ENCODE measurements at regions of chr4 and their contacts with region 1.

Region 1: DNA sequence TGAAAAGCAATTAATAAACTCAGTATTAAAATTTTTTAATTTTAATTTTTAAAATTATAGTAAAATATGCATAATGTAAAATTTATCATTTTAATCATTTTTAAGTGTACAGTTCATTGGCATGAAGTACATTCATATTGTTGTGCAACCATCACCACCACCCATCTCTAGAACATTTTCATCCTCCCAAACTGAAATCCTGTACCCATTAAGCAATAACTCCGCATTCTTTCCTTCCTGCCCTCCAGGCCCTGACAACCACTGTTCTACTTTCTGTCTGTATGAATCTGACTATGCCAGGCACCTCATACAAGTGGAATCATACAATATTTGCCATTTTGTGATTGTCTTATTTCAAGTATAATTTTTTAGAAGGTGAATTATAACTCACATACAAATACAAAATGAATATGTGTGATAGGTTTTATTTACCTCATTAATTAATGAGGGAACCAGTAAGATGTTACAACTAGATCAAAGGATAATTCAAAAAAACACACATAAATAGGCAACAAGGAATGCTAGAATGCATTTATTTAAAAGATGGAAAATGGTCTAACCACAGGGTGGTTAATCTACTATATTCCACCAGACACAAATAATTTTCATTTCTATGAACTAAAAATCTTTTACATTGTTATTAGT is 13.1 kb upstream of the AFF1 start:
- DNase-seq: no peak
- H3K4me3 ChIP-seq: no peak overlapping the region
- H3K4me3 Mint-ChIP-seq: no peak overlapping the region
- H3K27ac ChIP-seq: no peak overlapping the region
- H3K27ac Mint-ChIP-seq: no peak overlapping the region
- H3K4me1 ChIP-seq: no peaks in the 10 kb centered on the region
- H3K4me1 Mint-ChIP-seq: peaks cover 0 to 4% (median 2%) of the 10 kb centered on the region in 4 donors
- H3K27me3 ChIP-seq: no peaks in the 10 kb centered on the region
- H3K27me3 Mint-ChIP-seq: no peaks in the 10 kb centered on the region

Region 2: DNA sequence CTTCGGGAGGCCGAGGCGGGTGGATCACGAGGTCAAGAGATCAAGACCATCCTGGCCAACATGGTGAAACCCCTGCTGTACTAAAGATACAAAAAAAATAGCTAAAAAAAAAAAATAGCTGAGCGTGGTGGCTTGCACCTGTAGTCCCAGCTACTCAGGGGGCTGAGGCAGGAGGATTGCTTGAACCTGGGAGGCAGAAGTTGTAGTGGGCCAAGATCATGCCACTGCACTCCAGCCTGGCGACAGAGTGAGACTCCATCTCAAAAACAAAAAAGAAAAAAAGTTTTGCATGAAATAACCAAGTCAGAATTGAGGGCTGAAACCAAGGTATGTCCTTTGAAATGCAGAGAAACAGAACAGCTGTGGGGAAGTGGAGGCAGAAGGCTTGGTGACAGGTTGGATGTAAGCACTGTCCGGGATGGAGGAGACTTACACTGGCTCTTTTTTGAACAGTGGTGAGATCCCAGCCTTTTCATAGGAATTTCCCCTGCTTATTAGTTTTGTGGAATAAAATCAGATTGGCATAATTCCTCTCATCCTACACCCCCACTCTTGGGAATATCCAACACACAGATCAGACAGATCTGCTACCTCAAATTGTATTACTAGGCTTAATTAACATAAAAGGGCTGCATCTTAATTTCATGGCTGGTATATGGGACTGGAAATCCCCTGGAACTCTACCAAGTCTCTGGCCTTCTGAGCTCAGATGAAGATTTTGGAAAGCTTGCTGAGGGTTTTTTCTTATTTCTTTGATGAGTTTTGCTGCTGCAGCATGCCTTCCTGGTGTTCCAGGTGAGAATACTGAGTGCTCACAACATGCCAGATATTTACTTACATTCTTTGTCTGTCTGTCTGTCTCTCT is 10.7 kb before region 1 on chr4:
- CTCF ChIA-PET with region 1: interaction called, 30 read pairs
- POLR2A ChIA-PET with region 1: no interaction called
- intact Hi-C with region 1: no loop called
- DNase-seq: no peak
- H3K4me3 ChIP-seq: no peak overlapping the region
- H3K4me3 Mint-ChIP-seq: no peak overlapping the region
- H3K27ac ChIP-seq: no peak overlapping the region
- H3K27ac Mint-ChIP-seq: peak overlapping the region in 2 of 7 donors; percentile 22 to 74
- H3K4me1 ChIP-seq: peaks cover 5% of the 10 kb centered on the region
- H3K4me1 Mint-ChIP-seq: peaks cover 12 to 18% (median 13%) of the 10 kb centered on the region in 4 donors
- H3K27me3 ChIP-seq: no peaks in the 10 kb centered on the region
- H3K27me3 Mint-ChIP-seq: peaks cover 0 to 2% of the 10 kb centered on the region in 2 donors

Region 3: GRCh38 chr4:87006676-87007527 is 85.2 kb after region 1 on chr4:
- CTCF ChIA-PET with region 1: interaction called, 53 read pairs
- POLR2A ChIA-PET with region 1: interaction called, 25 read pairs
- intact Hi-C with region 1: loop called (anchors 1 kb)
- DNase-seq: peak; percentile 90 to 95 (median 91)
- H3K4me3 ChIP-seq: peak overlapping the region; percentile 82 to 86
- H3K4me3 Mint-ChIP-seq: peak overlapping the region; percentile 88 to 99 (median 94)
- H3K27ac ChIP-seq: peak overlapping the region; percentile 83
- H3K27ac Mint-ChIP-seq: peak overlapping the region; percentile 91 to 100 (median 97)
- H3K4me1 ChIP-seq: peaks cover 53% of the 10 kb centered on the region
- H3K4me1 Mint-ChIP-seq: peaks cover 47 to 58% (median 53%) of the 10 kb centered on the region in 4 donors
- H3K27me3 ChIP-seq: no peaks in the 10 kb centered on the region
- H3K27me3 Mint-ChIP-seq: no peaks in the 10 kb centered on the region

Region 4: DNA sequence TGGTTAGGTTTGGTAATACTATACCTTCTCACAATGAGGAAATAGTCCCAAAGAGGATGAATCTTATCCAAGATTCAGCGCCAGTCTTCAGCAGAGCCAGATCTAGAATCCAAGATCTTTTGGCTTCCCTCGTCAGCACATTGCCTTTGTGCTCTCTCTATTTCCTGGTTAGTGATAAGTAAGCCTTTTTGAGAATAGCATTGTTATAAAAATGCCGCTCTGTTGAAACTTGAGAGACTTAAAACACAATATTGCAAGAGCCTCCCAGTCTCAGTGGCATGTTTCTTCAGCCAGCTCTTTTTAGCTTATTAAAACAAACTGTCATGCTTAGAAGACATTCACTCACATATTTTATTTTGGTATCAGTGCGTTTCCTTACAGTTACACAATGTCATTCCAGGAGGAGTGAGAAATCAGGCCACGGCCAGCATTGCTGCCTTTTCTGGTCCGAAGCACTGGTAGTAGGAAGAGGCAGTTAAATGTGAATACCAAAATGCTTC is 157.3 kb after region 1 on chr4:
- CTCF ChIA-PET with region 1: interaction called, 23 read pairs
- POLR2A ChIA-PET with region 1: no interaction called
- intact Hi-C with region 1: no loop called
- DNase-seq: no peak
- H3K4me3 ChIP-seq: no peak overlapping the region
- H3K4me3 Mint-ChIP-seq: no peak overlapping the region
- H3K27ac ChIP-seq: no peak overlapping the region
- H3K27ac Mint-ChIP-seq: no peak overlapping the region
- H3K4me1 ChIP-seq: peaks cover 28% of the 10 kb centered on the region
- H3K4me1 Mint-ChIP-seq: peaks cover 38 to 66% (median 48%) of the 10 kb centered on the region in 4 donors
- H3K27me3 ChIP-seq: no peaks in the 10 kb centered on the region
- H3K27me3 Mint-ChIP-seq: no peaks in the 10 kb centered on the region

Region 5: DNA sequence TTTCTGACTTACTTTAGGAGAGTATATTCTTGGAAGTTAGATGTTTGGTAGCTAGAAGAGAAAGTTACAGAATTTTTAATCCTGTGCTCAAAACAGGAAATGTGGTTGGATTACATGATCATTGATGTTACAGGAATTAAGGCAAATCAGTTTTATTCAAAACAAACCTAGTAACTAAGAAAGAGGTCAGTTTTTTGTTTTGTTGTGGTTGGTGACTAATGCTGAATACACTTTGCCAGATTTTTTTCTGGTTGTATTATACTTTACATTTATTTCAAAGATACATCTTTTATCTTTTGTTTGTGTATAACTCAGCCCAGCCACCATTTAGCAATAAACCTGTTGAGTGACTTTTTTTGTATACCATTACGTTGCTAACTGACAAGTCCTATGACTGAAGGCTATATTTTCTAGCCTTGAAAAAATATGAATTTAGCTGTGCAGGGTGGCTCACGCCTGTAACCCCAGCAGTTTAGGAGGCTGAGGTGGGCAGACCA is 182.0 kb after region 1 on chr4:
- CTCF ChIA-PET with region 1: interaction called, 110 read pairs
- POLR2A ChIA-PET with region 1: interaction called, 6 read pairs
- intact Hi-C with region 1: no loop called
- DNase-seq: peak; percentile 51 to 84 (median 80)
- H3K4me3 ChIP-seq: no peak overlapping the region
- H3K4me3 Mint-ChIP-seq: peak overlapping the region; percentile 30 to 82 (median 75)
- H3K27ac ChIP-seq: peak overlapping the region; percentile 51
- H3K27ac Mint-ChIP-seq: peak overlapping the region; percentile 91 to 97 (median 96)
- H3K4me1 ChIP-seq: peaks cover 48% of the 10 kb centered on the region
- H3K4me1 Mint-ChIP-seq: peaks cover 51 to 67% (median 56%) of the 10 kb centered on the region in 4 donors
- H3K27me3 ChIP-seq: no peaks in the 10 kb centered on the region
- H3K27me3 Mint-ChIP-seq: no peaks in the 10 kb centered on the region

Region 6: GRCh38 chr4:87150498-87151261 is 228.9 kb after region 1 on chr4:
- CTCF ChIA-PET with region 1: interaction called, 29 read pairs
- POLR2A ChIA-PET with region 1: no interaction called
- intact Hi-C with region 1: loop called (anchors 1 kb)
- DNase-seq: peak; percentile 41 to 65 (median 54)
- H3K4me3 ChIP-seq: no peak overlapping the region
- H3K4me3 Mint-ChIP-seq: no peak overlapping the region
- H3K27ac ChIP-seq: no peak overlapping the region
- H3K27ac Mint-ChIP-seq: no peak overlapping the region
- H3K4me1 ChIP-seq: no peaks in the 10 kb centered on the region
- H3K4me1 Mint-ChIP-seq: peaks cover 0 to 4% (median 0%) of the 10 kb centered on the region in 4 donors
- H3K27me3 ChIP-seq: no peaks in the 10 kb centered on the region
- H3K27me3 Mint-ChIP-seq: no peaks in the 10 kb centered on the region